ENCODE measurements at regions of chr2 and their contacts with region 1.

Region 1: DNA sequence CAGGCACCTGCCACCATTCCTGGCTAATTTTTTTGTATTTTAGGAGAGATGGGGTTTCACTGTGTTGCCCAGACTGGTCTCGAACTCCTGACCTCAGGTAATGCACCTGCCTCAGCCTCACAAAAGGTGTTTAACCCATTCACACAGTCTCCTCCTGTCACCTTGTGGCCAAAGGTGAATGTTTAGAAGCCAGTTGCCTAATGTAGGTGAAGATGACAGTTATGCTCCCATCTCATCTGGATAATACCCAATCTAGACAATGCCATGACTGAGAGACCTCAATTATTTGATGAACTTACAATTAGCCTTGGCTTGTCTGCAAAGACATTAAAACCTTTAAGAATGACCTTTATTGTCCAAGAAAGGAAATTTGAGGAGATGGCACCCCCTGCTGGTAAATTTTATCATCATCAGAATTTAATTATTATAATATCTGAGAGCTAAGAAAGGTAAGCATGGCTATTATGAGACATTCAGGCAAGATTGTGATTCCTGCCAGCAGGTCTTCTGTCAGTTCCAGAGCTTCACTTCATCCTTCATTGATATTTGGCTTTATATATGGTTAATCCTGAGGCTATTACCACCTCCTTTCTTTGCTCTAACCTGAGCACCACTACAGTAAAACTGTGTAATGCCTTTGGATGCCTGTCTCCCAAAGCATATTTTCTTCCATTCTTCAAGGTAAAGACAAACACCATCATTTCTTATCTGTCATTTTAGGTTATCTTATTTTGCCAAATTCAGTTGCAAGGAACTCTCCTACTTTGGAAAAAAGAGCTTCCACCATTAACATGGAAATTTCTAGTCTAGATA is 117.6 kb downstream of the FAM124B start:
- DNase-seq: peak; percentile 22
- ATAC-seq: peak; percentile 58
- H3K4me3 Mint-ChIP-seq: no peak overlapping the region
- H3K27ac Mint-ChIP-seq: no peak overlapping the region
- H3K4me1 Mint-ChIP-seq: no peaks in the 10 kb centered on the region
- H3K27me3 Mint-ChIP-seq: peaks cover 13% of the 10 kb centered on the region

Region 2: GRCh38 chr2:222969491-222969890 is 1314.8 kb before region 1 on chr2:
- CTCF ChIA-PET with region 1: no interaction called
- POLR2A ChIA-PET with region 1: no interaction called
- intact Hi-C with region 1: loop called in 1 of 2 experiments (anchors 1 kb)
- DNase-seq: no peak
- ATAC-seq: no peak
- H3K4me3 Mint-ChIP-seq: no peak overlapping the region
- H3K27ac Mint-ChIP-seq: no peak overlapping the region
- H3K4me1 Mint-ChIP-seq: no peaks in the 10 kb centered on the region
- H3K27me3 Mint-ChIP-seq: no peaks in the 10 kb centered on the region

Region 3: GRCh38 chr2:223727562-223727961 is 556.8 kb before region 1 on chr2:
- CTCF ChIA-PET with region 1: interaction called, 6 read pairs
- POLR2A ChIA-PET with region 1: no interaction called
- intact Hi-C with region 1: loop called (anchors 1 to 5 kb)
- DNase-seq: peak; percentile 38
- ATAC-seq: peak; percentile 76
- H3K4me3 Mint-ChIP-seq: no peak overlapping the region
- H3K27ac Mint-ChIP-seq: no peak overlapping the region
- H3K4me1 Mint-ChIP-seq: no peaks in the 10 kb centered on the region
- H3K27me3 Mint-ChIP-seq: peaks cover 7% of the 10 kb centered on the region

Region 4: DNA sequence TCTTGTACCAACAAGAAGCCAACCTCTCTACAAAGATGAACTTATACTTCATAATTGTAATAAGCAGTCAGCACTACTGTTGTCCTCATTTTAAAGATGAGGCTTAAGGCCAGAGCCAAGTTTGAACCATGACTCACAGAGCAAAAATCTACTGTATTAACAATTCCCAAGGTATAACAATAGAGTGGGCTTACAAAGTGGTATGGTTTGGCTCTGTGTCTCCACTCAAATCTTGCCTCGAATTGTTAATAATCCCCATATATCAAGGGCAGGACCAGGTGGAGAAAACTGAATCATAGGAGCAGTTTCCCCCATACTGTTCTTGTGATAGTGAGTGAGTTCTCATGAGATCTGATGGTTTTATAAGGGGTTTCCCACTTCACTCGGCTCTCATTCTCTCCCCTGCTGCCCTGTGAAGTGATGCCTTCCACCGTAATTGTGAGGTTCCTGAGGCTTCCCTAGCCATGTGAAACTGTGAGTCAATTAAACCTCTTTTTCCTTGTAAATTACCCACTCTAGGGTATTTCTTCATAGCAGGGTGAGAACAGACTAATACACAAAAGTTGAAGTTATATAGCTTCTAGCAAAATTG is 307.6 kb before region 1 on chr2:
- CTCF ChIA-PET with region 1: interaction called, 199 read pairs
- POLR2A ChIA-PET with region 1: no interaction called
- intact Hi-C with region 1: no loop called
- DNase-seq: no peak
- ATAC-seq: peak; percentile 16
- H3K4me3 Mint-ChIP-seq: no peak overlapping the region
- H3K27ac Mint-ChIP-seq: no peak overlapping the region
- H3K4me1 Mint-ChIP-seq: no peaks in the 10 kb centered on the region
- H3K27me3 Mint-ChIP-seq: no peaks in the 10 kb centered on the region

Region 5: DNA sequence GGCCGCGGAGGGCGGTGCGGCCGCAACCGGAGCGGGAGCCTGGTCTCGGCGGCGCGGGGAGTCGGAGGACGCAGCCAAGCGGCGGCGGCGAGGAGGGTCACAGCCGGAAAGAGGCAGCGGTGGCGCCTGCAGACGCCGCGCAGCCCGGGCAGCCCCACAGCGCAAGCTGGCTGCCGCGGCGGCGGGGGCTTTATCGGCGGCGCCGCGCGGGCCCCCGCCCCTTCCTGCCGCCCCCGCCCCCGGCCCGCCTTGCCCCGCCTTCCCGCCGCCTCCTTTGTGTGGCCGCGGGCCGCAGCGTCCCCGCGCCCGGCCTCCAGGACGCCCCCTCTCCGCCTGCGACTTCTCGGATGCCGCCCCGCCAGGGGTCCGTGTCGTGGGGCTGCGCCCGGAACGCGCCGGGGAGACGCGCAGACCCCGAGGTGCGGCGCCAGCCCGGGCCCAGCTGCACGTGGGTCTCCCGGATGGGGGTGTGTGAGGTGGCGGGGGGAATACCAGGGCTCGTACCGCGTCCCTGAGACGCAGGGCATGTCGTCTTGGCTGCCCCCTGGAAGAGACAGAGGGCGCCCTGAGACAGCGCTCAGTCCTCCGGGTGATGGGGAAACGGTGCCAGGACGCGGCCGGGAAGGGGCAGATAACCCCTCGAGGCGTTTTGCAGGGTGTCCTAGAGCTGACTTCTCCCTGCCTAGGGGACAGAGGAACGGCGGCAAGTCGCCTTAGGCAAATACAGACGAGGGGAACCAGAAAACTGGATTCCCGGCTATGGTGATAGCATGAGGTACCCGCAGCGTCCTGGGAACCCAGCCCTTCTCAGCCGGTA is 245.0 kb before region 1 on chr2 and contains the start of gene SERPINE2:
- CTCF ChIA-PET with region 1: interaction called, 3 read pairs
- POLR2A ChIA-PET with region 1: no interaction called
- intact Hi-C with region 1: loop called (anchors 1 kb)
- DNase-seq: peak; percentile 75
- ATAC-seq: peak; percentile 73
- H3K4me3 Mint-ChIP-seq: peak within 1 kb of the TSS; percentile 83
- H3K27ac Mint-ChIP-seq: peak within 1 kb of the TSS; percentile 40
- H3K4me1 Mint-ChIP-seq: peaks cover 15% of the 10 kb centered on the region
- H3K27me3 Mint-ChIP-seq: peaks cover 51% of the 10 kb centered on the region
- total RNA-seq, gene SERPINE2: 30.9 to 46.6 TPM

Region 6: DNA sequence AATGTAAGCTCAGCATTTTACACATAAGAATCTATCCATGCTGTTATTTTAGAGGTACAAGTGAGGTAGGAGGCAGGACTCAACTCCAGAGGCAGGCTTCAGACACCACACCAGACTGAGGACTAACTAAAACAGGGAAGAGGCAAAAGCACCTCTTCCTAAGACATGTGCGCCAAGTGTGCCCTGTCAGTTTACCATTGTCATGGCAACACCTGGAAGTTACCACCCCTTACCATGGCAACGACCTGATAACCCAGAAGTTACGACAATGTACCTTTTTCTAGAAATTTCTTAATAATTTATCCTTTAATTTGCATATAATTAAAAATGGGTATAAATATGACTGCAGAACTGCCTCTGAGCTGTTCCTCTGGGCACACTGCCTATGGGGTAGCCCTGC is 42.5 kb before region 1 on chr2:
- CTCF ChIA-PET with region 1: no interaction called
- POLR2A ChIA-PET with region 1: no interaction called
- intact Hi-C with region 1: no loop called
- DNase-seq: no peak
- ATAC-seq: no peak
- H3K4me3 Mint-ChIP-seq: no peak overlapping the region
- H3K27ac Mint-ChIP-seq: no peak overlapping the region
- H3K4me1 Mint-ChIP-seq: no peaks in the 10 kb centered on the region
- H3K27me3 Mint-ChIP-seq: peaks cover 11% of the 10 kb centered on the region